Activated CD4-positive, alpha-beta memory T cell treated with anti-CD3 and anti-CD28 coated beads for 36 hours (primary cell): ENCODE measurements at regions of chr7 and their contacts with region 1.

Region 1: DNA sequence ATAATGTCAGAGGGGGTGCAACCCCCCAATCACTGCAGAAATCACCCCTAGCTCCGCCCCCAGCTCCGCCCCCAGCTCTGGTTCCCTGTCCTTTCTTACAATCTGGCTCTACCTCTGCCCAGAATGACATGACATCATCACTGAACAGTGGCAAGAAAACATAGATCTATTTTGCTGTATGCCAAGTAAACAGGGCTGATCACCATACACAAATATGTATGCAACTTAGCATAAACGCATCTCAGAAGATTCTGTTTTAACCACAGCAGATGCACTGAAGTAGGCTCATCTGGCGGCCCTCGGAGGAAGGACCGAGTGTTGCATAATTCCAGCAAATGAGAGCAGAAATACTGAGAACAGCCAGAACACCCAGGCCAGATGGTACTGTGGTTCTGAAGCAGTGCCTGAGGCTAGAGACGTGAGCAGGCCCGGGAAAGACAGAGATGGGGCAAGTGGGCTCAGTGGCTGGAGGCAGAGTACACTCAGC is 293.3 kb upstream of the KLF14 start:
- DNase-seq: peak; percentile 66
- H3K4me3 Mint-ChIP-seq: peak overlapping the region; percentile 36
- H3K27ac Mint-ChIP-seq: peak overlapping the region; percentile 79
- H3K4me1 Mint-ChIP-seq: peaks cover 87% of the 10 kb centered on the region
- H3K27me3 Mint-ChIP-seq: no peaks in the 10 kb centered on the region

Region 2: GRCh38 chr7:130699686-130700085 is 327.6 kb before region 1 on chr7:
- CTCF ChIA-PET with region 1: no interaction called
- POLR2A ChIA-PET with region 1: no interaction called
- intact Hi-C with region 1: no loop called
- DNase-seq: no peak
- H3K4me3 Mint-ChIP-seq: no peak overlapping the region
- H3K27ac Mint-ChIP-seq: no peak overlapping the region
- H3K4me1 Mint-ChIP-seq: no peaks in the 10 kb centered on the region
- H3K27me3 Mint-ChIP-seq: peaks cover 3% of the 10 kb centered on the region

Region 3: GRCh38 chr7:130838738-130839137 is 188.6 kb before region 1 on chr7:
- CTCF ChIA-PET with region 1: no interaction called
- POLR2A ChIA-PET with region 1: no interaction called
- intact Hi-C with region 1: loop called (anchors 5 kb)
- DNase-seq: peak; percentile 45
- H3K4me3 Mint-ChIP-seq: no peak overlapping the region
- H3K27ac Mint-ChIP-seq: no peak overlapping the region
- H3K4me1 Mint-ChIP-seq: peaks cover 19% of the 10 kb centered on the region
- H3K27me3 Mint-ChIP-seq: peaks cover 39% of the 10 kb centered on the region

Region 4: DNA sequence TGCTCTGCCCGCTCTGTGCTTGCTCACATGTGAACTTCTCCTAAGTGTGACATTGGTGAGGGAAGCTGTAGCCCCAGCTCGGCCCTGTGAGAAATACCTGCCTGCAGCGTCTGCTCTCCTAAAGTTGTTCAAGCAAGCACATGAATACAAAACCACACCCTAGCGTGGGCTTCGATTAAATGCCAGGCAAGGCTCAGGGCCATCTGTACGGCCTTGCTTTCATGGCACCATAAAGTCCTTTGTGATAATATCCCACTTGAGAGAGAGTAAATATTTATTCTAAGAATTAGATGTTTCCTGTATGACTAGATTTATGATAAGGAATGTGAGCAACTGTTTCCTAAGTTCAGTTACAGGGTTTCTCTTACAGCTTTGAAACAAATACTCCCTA is 30.5 kb before region 1 on chr7:
- CTCF ChIA-PET with region 1: interaction called, 3 read pairs
- POLR2A ChIA-PET with region 1: interaction called, 6 read pairs
- intact Hi-C with region 1: loop called (anchors 5 kb)
- DNase-seq: peak; percentile 73
- H3K4me3 Mint-ChIP-seq: peak overlapping the region; percentile 55
- H3K27ac Mint-ChIP-seq: peak overlapping the region; percentile 94
- H3K4me1 Mint-ChIP-seq: peaks cover 90% of the 10 kb centered on the region
- H3K27me3 Mint-ChIP-seq: no peaks in the 10 kb centered on the region